ENCODE measurements at regions of chr9 and their contacts with region 1.

Region 1: GRCh38 chr9:95588724-95589652 is 72.2 kb upstream of the PTCH1 start:
- DNase-seq: no peak
- ATAC-seq: no peak
- H3K4me3 ChIP-seq: no peak overlapping the region
- H3K27ac ChIP-seq: peak overlapping the region in 1 of 4 donors; percentile 9
- H3K4me1 ChIP-seq: no peaks in the 10 kb centered on the region
- H3K27me3 ChIP-seq: no peaks in the 10 kb centered on the region
- CTCF ChIP-seq: no peak
- POLR2A ChIP-seq: no peak

Region 2: GRCh38 chr9:95131023-95131943 is 457.7 kb before region 1 on chr9:
- intact Hi-C with region 1: no loop called
- DNase-seq: peak; percentile 73 to 83 (median 76)
- ATAC-seq: peak; percentile 72
- H3K4me3 ChIP-seq: no peak overlapping the region
- H3K27ac ChIP-seq: peak overlapping the region; percentile 32 to 72 (median 44)
- H3K4me1 ChIP-seq: peaks cover 35% of the 10 kb centered on the region
- H3K27me3 ChIP-seq: no peaks in the 10 kb centered on the region
- CTCF ChIP-seq: peak; percentile 43 to 89 (median 81)
- POLR2A ChIP-seq: no peak

Region 3: DNA sequence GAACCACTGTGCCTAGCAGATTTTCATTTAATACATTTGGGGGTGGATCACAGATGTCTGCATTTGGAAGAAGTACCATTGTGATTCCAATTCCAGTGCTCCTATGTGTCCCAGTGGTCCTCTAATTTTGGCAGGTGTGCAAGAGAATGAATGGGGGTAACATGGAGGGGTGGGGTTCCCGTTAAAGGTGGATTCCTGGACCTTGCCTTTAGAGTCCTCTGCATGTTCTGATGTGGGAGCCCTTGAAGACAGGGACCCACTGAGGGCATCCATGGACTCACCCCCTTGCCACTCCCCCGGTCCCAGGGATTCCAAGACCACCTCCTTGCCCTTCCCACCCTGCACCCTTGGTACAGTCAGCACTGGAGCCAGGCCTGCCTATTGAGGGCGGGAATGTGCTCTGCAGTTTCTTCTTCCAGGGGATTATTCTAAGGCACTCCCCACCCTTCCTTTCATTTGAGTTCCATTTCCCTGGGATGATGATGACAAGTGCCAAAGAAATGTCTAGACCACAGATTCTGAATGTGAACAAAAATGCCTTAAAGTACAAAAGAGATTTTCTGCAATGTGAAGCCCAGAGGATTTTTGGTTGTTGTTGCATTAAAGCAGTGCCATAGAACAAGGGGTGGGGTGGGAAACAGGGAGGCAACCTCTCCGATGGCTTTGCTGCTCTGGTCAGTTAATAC is 47.1 kb after region 1 on chr9:
- intact Hi-C with region 1: loop called (anchors 5 kb)
- DNase-seq: no peak
- ATAC-seq: no peak
- H3K4me3 ChIP-seq: no peak overlapping the region
- H3K27ac ChIP-seq: no peak overlapping the region
- H3K4me1 ChIP-seq: no peaks in the 10 kb centered on the region
- H3K27me3 ChIP-seq: no peaks in the 10 kb centered on the region
- CTCF ChIP-seq: no peak
- POLR2A ChIP-seq: no peak